Astrocyte of the cerebellum (primary cell): ENCODE measurements at regions of chr12 and their contacts with region 1.

Region 1: DNA sequence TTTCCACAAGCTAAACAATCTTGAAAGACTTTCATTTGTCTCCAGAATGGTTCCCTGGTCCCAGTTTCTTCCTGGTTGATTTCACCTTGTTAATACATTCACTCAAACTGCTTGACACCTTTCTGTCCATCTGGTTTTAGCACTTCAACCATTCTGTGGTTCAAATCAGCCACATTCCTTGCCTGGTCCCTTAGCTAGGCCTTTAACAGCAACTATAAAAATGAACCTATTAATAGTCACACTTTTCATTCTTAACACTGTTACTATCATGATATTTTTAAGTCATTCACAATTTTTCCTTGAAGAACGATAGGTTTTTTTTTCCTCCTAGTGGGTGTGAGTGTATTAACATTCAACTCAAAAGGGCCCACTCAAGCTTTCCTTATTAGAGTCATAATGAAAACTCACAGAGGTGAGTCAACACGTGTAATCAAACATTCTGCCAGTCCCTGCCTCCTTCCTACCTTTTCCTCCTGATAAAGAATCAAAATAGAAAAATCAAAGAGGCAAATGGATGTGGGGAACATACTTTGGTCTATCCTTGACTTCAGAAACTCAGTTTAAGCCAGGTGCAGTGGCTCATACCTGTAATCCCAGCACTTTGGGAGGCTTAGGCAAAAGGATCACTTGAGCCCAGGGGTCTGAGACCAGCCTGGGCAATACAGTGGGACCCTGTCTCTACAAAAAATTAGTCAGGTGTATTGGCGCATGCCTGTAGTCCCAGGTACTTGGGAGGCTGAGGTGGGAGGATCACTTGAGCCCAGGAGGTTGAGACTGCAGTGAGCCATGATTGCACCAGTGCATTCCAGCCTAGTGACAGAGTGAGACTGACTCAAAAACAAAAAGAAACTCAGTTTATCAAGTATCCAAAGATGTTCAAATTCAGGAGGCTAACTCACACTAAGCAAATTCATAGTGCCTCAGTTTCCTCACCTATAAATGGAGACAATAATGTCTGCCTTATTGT is 34.5 kb upstream of the CCNT1 start:
- DNase-seq: no peak
- H3K4me3 ChIP-seq: no peak overlapping the region
- CTCF ChIP-seq: no peak

Region 2: DNA sequence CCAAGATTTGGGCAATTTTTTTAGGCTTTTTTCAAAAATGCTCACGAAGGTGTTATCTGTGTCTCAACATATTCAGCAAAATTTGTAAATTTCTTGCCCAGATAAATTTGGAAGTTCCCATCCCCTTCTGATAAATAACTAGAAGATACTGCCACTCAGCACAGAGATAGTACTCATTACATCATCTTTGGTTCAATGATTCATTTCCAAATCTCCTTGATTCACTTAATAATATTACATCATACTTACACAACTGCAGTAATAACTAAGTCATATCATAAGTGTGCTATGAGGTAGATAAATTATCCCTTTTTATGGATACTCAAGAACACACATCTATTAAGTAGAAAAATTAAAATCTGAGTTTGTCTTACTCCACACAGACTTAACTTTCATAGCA is 1134.6 kb before region 1 on chr12:
- in situ Hi-C with region 1: no loop called
- DNase-seq: no peak
- H3K4me3 ChIP-seq: no peak overlapping the region
- CTCF ChIP-seq: no peak

Region 3: DNA sequence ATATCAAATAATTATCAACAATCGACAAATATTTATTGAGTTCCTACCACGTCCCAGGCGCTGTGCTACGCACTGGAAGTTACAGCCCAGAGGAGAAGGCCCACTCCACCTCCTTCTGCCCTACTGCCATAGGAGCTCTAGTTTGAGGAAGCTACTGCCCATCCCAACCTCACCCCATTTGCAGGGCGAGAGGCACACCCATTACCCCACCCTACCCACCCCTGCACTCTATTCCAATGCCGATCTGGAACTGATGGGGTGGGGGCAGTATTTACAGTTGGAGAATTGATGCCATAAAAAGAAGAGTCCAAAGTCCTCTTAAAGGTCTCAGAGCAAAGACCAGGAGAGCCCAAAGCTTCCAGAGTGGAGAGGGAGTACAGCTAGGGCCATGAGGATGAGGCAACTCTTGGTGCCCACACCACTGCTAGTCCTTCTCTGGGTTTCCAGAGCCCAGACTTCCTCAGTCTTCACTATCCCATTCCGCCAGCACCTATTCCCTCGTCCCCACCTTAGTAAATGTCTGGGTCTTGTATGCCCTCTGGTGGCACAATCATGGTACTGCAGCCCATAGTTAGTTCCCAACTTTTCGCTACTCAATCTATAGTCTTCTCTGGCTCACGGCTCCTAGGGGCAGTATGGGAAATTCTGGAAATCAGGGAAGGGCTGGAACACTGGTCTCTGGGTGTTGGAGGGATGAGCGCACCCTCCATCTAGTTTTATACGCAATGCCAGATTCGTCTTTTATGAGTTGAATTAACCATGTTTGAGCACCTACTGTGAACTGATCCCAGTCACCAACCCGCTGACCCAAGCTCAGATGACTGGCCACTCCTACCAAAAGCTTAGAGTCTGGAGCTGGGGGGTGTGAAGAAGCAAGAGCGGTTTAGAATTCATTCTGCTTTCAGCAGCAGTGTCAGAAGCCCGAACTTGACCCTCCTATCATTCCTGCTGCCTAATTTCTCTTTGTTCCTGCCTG is 44.7 kb after region 1 on chr12:
- in situ Hi-C with region 1: loop called (anchors 5 kb)
- DNase-seq: peak; percentile 57
- H3K4me3 ChIP-seq: no peak overlapping the region
- CTCF ChIP-seq: peak; percentile 95